Calu3 (cell line): ENCODE measurements at regions of chr5 and their contacts with region 1.

Region 1: GRCh38 chr5:36944607-36945225 is 68.1 kb downstream of the NIPBL start:
- DNase-seq: no peak
- H3K4me3 Mint-ChIP-seq: no peak overlapping the region
- H3K27ac Mint-ChIP-seq: no peak overlapping the region
- H3K4me1 Mint-ChIP-seq: peaks cover 34% of the 10 kb centered on the region
- H3K27me3 Mint-ChIP-seq: no peaks in the 10 kb centered on the region
- CTCF ChIP-seq: peak; percentile 30

Region 2: GRCh38 chr5:36897616-36898015 is 47.1 kb before region 1 on chr5:
- CTCF ChIA-PET with region 1: no interaction called
- intact Hi-C with region 1: loop called (anchors 5 kb)
- DNase-seq: no peak
- H3K4me3 Mint-ChIP-seq: no peak overlapping the region
- H3K27ac Mint-ChIP-seq: peak overlapping the region; percentile 81
- H3K4me1 Mint-ChIP-seq: peaks cover 9% of the 10 kb centered on the region
- H3K27me3 Mint-ChIP-seq: no peaks in the 10 kb centered on the region
- CTCF ChIP-seq: no peak